Left cardiac atrium (tissue), 4 donors: ENCODE measurements at regions of chr15 and their contacts with region 1.

Region 1: DNA sequence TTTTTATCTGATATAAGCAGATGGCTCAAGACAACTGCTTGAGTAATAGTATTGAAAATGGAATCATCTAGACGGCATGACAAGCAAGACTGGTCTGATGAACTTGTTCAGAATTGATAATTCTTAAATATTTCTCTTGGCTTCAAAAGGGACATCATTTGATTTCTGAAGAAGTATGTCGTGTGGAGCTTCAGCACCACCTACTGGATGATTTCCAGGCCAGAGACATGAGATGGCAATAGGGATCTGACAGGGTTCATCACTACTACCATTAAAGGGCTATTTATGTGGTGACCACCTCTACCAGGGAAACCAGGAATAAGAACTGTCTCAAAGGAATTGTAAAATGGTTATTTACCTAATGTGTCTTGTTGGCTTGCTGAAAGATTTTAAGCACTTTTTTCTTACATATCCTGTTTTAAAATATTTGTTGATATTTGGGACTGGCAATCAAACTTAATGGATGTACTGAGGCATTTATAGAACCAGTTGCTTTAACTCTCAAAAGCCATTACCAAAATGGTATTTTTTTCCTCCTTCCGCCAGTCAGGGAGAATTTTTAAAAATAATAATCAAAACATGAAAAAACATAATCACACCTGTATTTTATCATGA is 99.5 kb upstream of the FAM98B start:
- DNase-seq: peak; percentile 50
- ATAC-seq: peak in 1 of 2 donors; percentile 62

Region 2: GRCh38 chr15:37995461-37996347 is 358.7 kb before region 1 on chr15:
- intact Hi-C with region 1: loop called (anchors 2 to 10 kb)
- DNase-seq: peak; percentile 36
- ATAC-seq: peak; percentile 78 to 96

Region 3: DNA sequence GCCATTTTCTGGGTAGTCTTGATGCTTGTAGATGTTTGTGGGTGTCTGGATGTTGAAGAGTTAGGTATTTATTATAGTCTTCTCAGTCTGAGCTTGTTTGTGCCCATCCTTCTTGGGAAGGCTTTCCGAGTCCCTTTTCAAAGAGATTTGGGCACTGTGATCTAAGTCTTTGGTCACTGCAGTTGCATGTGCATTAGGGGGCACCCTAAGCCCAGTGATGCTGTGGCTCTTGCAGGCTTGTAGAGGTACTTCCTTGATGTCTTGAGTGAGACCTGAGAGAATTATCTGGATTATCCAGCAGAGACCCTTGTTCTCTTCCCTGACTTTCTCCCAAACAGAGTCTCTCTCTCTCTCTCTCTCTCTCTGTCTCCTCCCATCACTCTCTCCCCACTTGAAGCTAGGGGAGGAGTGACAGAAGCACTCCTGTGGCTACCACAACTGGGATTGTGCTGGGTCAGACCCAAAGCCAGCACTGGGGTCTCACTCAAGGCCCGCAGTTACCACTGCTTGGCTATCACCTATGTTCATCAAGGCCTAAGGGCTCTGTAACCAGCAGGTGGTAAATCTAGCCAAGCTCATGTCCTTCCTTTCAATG is 351.4 kb before region 1 on chr15:
- intact Hi-C with region 1: loop called (anchors 2 to 10 kb)
- DNase-seq: peak; percentile 41
- ATAC-seq: peak; percentile 80

Region 4: DNA sequence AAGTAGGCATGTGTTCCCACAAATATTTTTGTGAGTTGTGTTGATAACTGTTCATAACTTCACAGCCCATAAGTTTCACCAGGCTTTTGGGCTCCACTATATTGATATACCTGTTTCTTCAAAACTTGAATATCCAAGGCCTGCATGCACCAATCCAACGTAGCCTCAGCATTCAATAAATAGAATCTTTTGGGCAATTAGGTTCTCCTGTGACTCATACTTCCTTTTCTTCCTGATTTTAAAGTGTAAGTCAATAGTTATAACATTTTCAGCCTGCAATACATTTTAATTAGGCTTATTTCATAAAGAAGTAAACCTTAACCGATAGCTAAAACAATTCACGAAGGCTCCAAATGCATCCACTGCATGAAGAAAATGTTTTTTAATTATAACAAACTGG is 199.6 kb before region 1 on chr15:
- intact Hi-C with region 1: no loop called
- DNase-seq: no peak
- ATAC-seq: no peak

Region 5: DNA sequence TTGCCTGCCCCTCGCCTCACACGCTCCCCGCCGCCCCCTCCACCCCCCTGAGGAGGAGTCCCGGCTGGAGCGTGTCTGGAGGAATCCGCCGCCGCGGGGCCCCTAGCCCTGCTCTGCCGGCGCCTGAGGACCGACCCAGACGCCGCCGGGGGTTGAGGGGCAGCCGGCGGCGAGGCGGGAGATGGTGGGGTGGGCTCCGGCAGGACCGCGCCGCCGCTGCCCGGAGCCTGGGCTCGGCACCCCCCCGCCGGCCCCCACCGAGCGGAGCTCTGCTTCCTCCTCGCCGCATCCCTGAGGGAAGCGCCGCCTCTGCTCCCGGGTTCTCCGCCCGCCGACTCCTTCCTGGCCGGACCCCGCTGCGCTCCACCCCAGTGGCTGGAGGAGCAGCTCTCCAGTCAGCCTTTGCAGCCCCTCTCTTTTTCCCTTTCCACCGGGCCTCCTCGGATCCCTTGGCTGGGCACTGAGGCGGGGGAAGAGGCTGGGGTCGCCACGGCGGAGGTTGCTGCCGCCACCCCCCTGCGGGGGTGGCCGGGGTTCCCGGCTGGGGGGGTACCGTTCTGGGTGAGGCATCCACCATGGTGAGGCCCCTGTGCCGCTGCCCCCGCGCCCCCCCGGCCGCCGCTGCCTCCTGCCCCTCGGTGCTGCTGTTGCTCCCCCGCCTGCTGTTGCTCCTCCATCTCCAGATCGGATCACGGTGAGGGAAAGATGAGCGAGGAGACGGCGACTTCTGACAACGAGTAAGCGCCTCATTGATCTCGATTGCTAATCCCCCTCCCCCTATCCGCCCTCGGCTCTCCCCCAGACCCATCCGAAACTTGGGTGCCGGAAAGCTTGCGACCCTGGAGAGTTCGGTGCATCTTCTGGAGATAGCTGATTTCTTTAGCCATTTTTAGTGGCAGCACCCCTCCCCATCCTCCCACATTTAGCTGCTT is 101.7 kb before region 1 on chr15 and contains the start of gene SPRED1:
- intact Hi-C with region 1: loop called in 1 of 2 experiments (anchors 5 kb)
- DNase-seq: peak; percentile 84
- ATAC-seq: peak; percentile 73 to 84
- total RNA-seq, gene SPRED1: 16.1 to 19.9 TPM

Region 6: GRCh38 chr15:38474155-38474757 is 119.8 kb after region 1 on chr15:
- intact Hi-C with region 1: no loop called
- DNase-seq: no peak
- ATAC-seq: peak; percentile 94 to 96

Region 7: GRCh38 chr15:38536201-38536676 is 181.8 kb after region 1 on chr15:
- intact Hi-C with region 1: no loop called
- DNase-seq: peak; percentile 70
- ATAC-seq: peak; percentile 60 to 81